ENCODE measurements at regions of chr2 and their contacts with region 1.

Region 1: DNA sequence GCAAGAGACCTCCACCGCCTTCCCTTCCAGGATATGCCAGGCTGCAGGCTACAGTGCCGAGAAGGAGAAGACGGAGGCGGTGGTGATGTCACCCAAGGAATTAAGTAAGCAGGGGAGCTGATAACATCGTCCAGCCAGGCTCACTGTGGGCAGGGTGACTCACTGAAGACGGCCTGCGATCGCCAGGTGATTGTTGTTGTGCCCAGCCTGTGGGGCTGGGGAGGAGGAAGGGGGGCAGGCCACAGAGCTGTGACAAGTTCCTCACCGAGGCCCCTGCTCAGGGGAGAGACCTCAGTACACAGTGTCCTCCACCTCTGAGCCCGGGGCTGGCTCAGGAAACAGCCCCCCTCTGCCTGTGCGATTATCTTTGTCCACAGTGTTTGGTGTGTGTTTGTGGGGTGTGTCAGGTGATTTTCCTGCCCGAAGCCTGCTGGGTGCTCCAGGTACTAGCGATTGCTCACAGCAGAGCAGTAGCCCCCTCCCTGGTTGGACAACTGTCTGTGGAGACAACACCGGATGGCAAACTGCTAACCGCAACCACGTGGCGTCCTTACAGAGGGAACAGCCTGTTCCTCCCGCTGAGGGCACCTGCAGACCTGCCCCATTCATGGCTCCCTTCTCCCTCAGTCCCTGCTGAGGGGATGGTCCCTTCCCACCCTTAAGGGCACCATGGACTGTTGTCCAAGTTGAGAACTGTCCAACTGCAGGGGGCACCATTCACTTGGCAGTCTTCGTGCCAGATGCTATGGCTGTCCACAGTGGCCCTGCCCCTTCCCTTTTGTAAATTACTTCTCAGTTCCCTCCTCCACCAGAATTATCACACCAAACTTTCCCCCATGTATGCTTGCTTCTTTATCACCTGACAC is 95.1 kb downstream of the ZFP36L2 start:
- DNase-seq: peak; percentile 79
- H3K4me3 Mint-ChIP-seq: peak overlapping the region; percentile 65
- H3K27ac Mint-ChIP-seq: peak overlapping the region; percentile 67
- H3K4me1 Mint-ChIP-seq: peaks cover 78% of the 10 kb centered on the region
- H3K27me3 Mint-ChIP-seq: no peaks in the 10 kb centered on the region

Region 2: GRCh38 chr2:42944779-42945415 is 186.4 kb before region 1 on chr2:
- intact Hi-C with region 1: loop called (anchors 5 kb)
- DNase-seq: no peak
- H3K4me3 Mint-ChIP-seq: no peak overlapping the region
- H3K27ac Mint-ChIP-seq: no peak overlapping the region
- H3K4me1 Mint-ChIP-seq: peaks cover 3% of the 10 kb centered on the region
- H3K27me3 Mint-ChIP-seq: peaks cover 2% of the 10 kb centered on the region

Region 3: GRCh38 chr2:42996528-42996927 is 134.7 kb before region 1 on chr2:
- intact Hi-C with region 1: no loop called
- DNase-seq: no peak
- H3K4me3 Mint-ChIP-seq: no peak overlapping the region
- H3K27ac Mint-ChIP-seq: no peak overlapping the region
- H3K4me1 Mint-ChIP-seq: no peaks in the 10 kb centered on the region
- H3K27me3 Mint-ChIP-seq: peaks cover 4% of the 10 kb centered on the region

Region 4: DNA sequence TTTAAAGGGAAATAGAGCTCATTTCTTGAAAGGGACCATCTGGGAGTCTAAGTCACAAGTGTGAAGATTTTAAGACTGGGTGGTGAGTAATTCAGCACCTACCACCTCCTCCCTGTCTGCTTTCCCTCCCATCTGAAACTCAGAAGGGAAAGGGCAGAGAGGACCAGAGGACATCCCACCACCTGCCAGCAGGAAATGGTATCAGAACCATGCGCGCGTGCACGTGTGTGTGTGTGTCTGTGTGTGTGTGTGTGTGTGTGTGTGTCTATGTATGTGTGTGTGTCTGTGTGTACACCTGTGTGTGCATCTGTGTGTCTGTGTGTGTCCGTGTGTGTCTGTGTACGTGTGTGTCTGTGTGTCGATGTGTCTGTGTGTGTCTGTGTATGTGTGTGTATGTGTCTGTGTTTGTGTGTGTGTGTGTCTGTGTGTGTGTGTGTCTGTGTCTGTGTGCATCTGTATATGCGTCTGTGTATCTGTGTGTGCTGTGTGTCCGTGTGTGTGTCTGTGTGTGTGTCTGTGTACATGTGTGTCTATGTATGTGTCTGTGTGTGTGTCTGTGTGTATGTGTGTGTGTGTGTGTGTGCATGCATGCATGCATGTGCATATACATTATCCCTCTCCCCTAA is 18.3 kb after region 1 on chr2:
- intact Hi-C with region 1: loop called (anchors 1 kb)
- DNase-seq: no peak
- H3K4me3 Mint-ChIP-seq: peak overlapping the region; percentile 34
- H3K27ac Mint-ChIP-seq: peak overlapping the region; percentile 85
- H3K4me1 Mint-ChIP-seq: peaks cover 43% of the 10 kb centered on the region
- H3K27me3 Mint-ChIP-seq: no peaks in the 10 kb centered on the region

Region 5: DNA sequence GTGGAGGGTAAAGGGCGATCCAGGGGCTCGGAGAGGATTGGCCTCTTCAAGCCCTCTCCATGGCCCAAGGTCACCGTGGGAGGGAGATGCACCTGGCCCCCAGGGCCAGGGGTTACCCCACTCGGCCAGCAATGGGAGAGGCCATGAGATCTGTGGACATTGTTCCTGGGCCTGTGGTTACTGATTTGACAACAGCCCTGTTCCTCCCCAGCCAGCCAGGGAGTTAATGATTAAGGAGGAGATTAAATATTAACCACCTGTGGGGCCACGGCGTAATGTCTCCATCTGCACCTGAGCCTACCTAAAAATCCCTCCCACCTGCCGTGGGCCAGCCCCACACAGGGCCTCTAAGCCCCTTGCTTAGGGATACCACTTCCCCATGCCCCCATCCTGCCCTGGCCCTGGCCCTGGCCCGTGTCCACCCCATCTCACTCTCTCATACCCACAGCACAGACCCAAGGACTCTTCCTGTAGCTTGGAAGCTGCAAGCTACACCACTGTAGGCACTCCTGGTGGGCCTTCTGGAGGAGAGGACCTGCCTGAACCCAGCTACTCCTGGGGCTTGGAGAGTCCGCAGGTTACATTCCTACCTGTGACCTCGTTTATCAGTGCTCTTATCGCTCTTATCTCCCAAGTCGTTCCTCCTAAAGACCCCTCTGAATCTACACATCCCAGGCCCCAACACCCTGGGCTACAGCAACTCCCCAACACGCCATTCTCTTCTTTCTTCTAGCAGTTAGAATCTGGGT is 63.0 kb after region 1 on chr2:
- intact Hi-C with region 1: loop called (anchors 1 kb)
- DNase-seq: no peak
- H3K4me3 Mint-ChIP-seq: peak overlapping the region; percentile 58
- H3K27ac Mint-ChIP-seq: peak overlapping the region; percentile 86
- H3K4me1 Mint-ChIP-seq: peaks cover 41% of the 10 kb centered on the region
- H3K27me3 Mint-ChIP-seq: no peaks in the 10 kb centered on the region

Region 6: DNA sequence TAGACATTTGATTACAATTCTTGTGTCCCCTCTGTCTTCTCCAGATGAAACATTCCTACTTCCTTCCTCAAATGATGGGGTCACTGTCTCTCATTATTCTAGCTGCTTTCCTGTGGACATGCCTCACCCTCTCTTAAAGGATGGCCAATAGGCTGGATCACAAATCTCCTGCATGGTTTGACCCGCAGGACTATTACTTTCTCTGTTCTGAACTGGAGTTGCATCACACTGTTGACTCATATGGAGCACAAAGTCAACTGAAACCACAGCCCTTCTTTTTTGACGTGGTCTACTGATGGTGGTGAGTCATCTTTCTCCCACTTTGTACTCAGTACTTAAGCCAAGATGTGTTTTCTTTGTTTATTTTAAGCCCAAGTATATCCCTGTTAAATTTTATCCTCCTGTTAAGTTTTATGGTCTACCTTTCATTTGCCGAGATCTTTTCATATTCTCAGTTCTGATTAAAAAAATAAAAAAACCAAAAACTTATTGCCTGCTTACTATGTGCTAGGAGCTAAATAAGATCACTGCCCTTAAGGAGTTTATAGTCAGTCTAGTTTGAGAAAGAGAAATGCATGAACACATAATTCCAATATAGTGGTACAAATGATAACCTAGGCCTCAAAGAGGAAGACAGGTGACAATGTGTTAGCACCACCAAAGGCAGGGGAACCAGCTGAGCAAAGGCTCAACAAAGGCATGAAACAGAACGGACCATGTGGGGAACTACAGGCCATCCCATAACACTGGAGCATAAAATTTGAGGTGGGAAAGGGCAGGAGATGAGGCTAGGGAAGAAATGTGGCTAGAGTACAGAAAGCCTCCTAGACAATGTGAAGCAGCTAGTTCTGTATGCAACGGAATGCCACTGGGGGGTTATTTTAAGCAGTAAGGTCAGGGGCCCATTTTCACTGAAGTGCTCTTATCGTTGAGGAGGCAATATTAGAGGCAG is 162.8 kb after region 1 on chr2:
- intact Hi-C with region 1: loop called (anchors 5 kb)
- DNase-seq: peak; percentile 54
- H3K4me3 Mint-ChIP-seq: peak overlapping the region; percentile 34
- H3K27ac Mint-ChIP-seq: peak overlapping the region; percentile 68
- H3K4me1 Mint-ChIP-seq: peaks cover 31% of the 10 kb centered on the region
- H3K27me3 Mint-ChIP-seq: no peaks in the 10 kb centered on the region

Region 7: GRCh38 chr2:43559391-43560230 is 428.4 kb after region 1 on chr2:
- intact Hi-C with region 1: loop called (anchors 5 kb)
- DNase-seq: no peak
- H3K4me3 Mint-ChIP-seq: peak overlapping the region; percentile 20
- H3K27ac Mint-ChIP-seq: peak overlapping the region; percentile 89
- H3K4me1 Mint-ChIP-seq: peaks cover 53% of the 10 kb centered on the region
- H3K27me3 Mint-ChIP-seq: no peaks in the 10 kb centered on the region